ENCODE measurements at regions of chr15 and their contacts with region 1.

Region 1: DNA sequence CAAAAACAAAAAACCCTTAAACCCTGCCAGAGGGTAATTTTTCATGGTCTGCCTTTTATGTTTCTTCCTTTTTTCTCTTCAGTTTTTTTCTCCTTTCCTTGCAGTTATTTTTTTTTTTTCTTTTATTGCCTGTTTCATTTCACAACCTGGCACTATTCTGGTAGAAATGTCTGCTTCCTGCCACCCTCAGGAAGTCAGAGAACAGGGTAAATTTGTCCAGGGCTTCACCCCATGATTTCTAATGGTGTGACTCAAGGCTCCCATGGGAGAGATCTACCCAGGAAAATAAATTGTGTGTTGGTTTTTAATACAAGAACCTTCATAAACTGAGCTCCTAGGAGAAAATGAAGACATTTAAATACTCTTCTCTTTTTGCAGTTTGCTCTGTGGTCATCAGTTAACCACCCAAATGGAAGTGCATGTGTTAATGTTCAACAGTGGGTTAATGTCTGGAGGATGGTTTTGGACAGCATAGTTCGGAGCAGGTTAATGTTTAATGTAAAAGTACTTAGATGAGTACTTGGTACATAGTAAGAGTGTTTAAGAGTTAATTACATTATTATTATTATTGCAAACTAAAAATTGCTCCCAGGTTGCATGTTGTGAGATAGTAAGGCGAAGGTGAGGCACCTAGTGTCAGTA is 45.9 kb downstream of the CGNL1 start:
- DNase-seq: no peak
- ATAC-seq: no peak
- H3K4me3 ChIP-seq: no peak overlapping the region
- H3K27ac ChIP-seq: no peak overlapping the region
- H3K4me1 ChIP-seq: peaks cover 0 to 6% of the 10 kb centered on the region in 2 donors
- H3K27me3 ChIP-seq: no peaks in the 10 kb centered on the region

Region 2: DNA sequence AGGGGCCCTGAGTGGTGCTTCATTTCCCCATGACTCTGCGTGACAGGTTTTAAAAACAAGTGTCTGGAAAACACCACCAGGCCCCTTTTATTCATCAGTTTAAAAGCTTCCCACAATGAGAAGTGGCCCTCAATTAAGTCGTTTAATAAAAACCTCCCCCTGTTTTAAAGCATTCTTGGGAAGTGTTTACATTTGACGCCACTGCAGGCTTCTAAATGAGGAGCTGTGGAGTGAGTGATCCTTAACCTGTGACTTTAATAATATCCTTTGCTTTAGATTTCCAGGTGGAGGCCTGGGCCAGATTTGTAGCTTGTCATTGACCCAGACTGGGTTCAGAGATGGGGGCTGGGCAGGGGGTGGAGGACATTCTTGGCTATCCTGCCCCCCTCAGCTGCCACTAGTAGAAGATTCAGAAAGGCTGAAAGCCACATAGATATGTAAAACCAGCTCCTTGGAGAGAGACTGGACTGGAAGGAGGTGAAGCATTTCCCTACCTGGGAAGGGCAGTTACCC is 34.6 kb before region 1 on chr15:
- intact Hi-C with region 1: loop called in 1 of 2 experiments (anchors 5 kb)
- DNase-seq: no peak
- ATAC-seq: no peak
- H3K4me3 ChIP-seq: no peak overlapping the region
- H3K27ac ChIP-seq: peak overlapping the region in 1 of 2 donors; percentile 31
- H3K4me1 ChIP-seq: no peaks in the 10 kb centered on the region
- H3K27me3 ChIP-seq: no peaks in the 10 kb centered on the region

Region 3: GRCh38 chr15:57462381-57462780 is 40.1 kb after region 1 on chr15:
- intact Hi-C with region 1: no loop called
- DNase-seq: no peak
- ATAC-seq: no peak
- H3K4me3 ChIP-seq: no peak overlapping the region
- H3K27ac ChIP-seq: no peak overlapping the region
- H3K4me1 ChIP-seq: peaks cover 0 to 3% of the 10 kb centered on the region in 2 donors
- H3K27me3 ChIP-seq: no peaks in the 10 kb centered on the region

Measured in aorta (tissue), 5 donors.